Activated T-helper 1 cell treated with anti-CD3 and anti-CD28 coated beads, Interleukin-12 subunit alpha, Interleukin-12 subunit beta, Interleukin-2, Interleukin-4 antibody, amounts not matched to agents 30 ng/mL and 10 ng/mL and 1 ng/mL, durations not matched to agents 14 hours and 24 hours and 36 hours (primary cell): ENCODE measurements at regions of chr16 and their contacts with region 1.

Region 1: GRCh38 chr16:30922960-30923535 is 324 bp upstream of the FBXL19 start:
- DNase-seq: peak; percentile 95
- H3K4me3 Mint-ChIP-seq: peak overlapping the region; percentile 95
- H3K27ac Mint-ChIP-seq: peak overlapping the region; percentile 100
- H3K4me1 Mint-ChIP-seq: peaks cover 18% of the 10 kb centered on the region
- H3K27me3 Mint-ChIP-seq: no peaks in the 10 kb centered on the region

Region 2: DNA sequence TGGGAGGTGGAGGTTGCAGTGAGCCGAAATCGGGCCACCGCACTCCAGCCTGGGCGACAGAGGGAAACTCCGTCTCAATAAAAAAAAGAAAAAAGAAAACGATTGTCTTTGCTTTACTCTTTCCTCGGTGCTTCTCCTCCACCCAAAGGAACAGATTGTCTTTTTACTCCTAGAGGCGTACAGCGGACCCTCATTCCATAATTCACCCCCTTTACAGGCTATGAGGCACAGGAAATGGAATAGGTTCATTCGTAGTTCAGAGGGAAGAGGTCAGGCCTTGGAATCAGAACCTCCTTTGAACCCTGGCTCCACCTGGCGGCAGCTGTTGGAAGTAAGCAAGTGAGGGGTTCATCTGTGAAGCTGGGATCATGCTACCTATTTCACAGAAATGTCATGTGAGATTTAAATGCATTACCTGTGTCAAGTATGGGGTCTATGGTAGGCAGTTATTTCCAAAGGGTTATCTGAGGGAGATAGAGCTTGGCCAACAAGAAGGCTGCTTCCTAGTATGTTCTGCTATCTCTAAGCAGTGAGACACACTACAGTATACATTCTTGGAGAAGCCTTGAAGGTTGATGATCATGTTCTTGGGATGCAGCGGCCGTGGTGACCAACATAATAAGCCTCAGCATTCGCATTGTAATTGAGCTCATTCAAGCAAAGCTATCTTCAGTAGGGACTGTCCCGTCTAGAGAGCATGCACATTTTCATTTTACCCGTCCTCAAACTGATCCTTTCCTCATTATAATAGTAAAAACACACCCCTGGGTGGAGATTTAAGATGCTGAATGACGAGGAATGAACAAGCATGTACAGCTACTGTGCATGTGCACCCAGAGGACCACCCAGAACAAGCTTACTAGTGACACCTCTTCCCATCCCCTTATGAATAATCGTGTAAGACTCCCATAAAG is 294.2 kb before region 1 on chr16:
- intact Hi-C with region 1: loop called (anchors 1 kb)
- DNase-seq: peak; percentile 77
- H3K4me3 Mint-ChIP-seq: peak overlapping the region; percentile 52
- H3K27ac Mint-ChIP-seq: peak overlapping the region; percentile 71
- H3K4me1 Mint-ChIP-seq: peaks cover 10% of the 10 kb centered on the region
- H3K27me3 Mint-ChIP-seq: no peaks in the 10 kb centered on the region

Region 3: DNA sequence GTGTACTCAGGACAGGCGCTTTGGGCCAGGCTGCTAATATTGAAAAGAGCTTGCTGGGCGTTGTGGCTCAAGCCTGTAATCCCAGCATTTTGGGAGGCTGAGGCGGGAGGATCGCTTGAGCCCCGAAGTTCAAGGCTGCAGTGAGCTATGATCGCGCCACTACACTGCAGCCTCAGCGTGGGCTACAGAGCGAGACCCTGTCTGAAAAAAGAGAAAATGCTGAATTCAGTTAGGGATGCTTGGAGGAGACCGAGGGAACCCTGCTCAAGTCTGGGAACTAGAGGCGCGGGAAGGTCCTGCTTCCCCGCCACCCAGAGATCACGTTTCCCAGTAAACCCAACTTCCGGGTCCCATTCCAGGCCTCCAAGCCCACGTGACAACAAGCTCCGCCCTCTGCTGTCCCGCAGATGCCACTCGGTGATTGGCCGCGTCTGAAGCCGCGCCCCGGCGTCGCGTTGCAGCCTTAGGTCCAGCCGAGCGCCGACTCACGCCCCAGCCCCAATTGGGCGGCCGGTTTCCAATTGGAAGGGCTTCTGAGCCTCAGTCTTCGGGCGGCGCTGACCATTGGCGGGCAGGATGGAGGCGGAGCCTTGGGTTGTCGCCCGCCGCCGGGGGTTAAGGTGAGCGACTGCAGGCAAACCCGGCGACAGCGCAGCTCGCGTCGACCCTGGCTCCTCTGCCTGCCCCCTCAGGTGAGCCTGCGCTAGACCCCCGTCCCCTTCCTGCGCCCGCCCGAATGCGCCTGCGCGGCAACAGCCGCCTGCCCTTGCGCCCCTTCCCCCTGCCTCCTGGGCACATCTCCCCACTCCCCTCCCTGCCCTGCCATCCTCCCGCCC is 175.0 kb before region 1 on chr16 and contains the start of gene PHKG2:
- intact Hi-C with region 1: loop called (anchors 1 kb)
- DNase-seq: peak; percentile 97
- H3K4me3 Mint-ChIP-seq: peak within 1 kb of the TSS; percentile 93
- H3K27ac Mint-ChIP-seq: peak within 1 kb of the TSS; percentile 83
- H3K4me1 Mint-ChIP-seq: peaks cover 19% of the 10 kb centered on the region
- H3K27me3 Mint-ChIP-seq: no peaks in the 10 kb centered on the region
- total RNA-seq, gene PHKG2: 42.4 and 43.6 TPM in 2 replicates

Region 4: GRCh38 chr16:30829130-30830071 is 93.6 kb before region 1 on chr16:
- intact Hi-C with region 1: no loop called
- DNase-seq: no peak
- H3K4me3 Mint-ChIP-seq: no peak overlapping the region
- H3K27ac Mint-ChIP-seq: no peak overlapping the region
- H3K4me1 Mint-ChIP-seq: no peaks in the 10 kb centered on the region
- H3K27me3 Mint-ChIP-seq: peaks cover 15% of the 10 kb centered on the region

Region 5: DNA sequence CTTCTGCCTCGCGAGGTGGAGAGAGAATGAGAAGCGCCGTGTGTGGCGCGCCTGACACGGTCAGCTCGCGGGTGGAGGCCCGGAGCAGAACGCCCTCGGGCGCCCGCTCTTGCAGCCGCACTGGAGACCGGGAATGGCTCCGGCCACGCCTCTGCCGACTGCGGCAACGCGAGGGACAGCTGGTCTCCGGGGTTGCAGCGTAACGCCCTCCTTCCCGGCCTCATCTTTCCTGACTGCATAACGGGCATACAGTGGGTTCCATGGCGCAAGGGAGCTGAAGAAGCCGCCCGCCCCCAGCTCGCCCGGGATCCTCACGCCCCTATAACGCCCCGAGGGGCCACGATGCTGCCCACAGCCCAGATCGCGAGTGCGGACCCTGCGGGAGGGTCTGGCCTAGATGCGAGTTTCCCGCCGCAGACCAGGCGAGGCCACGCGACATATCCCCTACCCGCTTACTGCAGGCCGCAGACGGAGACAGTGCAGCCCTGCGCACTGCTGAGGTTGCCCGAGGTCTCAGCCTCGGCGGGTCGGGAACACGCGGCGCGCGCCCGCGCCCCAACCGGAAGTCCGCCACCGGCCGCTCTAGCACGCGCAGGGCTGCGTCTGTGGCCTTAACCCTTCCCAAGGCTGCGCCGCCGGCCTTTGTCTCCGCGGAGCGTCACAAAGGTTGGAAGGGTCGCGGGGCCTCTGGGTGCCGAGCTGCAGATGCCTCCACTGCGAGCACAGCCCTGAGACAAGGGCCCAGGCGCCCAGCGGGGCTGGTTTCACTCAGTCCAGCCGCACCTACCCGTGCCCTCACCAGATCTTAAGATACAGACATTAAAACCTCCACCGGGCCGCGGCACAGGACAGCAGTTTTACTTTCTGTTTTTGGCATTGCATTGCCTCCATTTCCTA is 48.0 kb before region 1 on chr16:
- intact Hi-C with region 1: loop called (anchors 1 kb)
- DNase-seq: peak; percentile 86
- H3K4me3 Mint-ChIP-seq: peak overlapping the region; percentile 97
- H3K27ac Mint-ChIP-seq: peak overlapping the region; percentile 94
- H3K4me1 Mint-ChIP-seq: peaks cover 23% of the 10 kb centered on the region
- H3K27me3 Mint-ChIP-seq: no peaks in the 10 kb centered on the region

Region 6: DNA sequence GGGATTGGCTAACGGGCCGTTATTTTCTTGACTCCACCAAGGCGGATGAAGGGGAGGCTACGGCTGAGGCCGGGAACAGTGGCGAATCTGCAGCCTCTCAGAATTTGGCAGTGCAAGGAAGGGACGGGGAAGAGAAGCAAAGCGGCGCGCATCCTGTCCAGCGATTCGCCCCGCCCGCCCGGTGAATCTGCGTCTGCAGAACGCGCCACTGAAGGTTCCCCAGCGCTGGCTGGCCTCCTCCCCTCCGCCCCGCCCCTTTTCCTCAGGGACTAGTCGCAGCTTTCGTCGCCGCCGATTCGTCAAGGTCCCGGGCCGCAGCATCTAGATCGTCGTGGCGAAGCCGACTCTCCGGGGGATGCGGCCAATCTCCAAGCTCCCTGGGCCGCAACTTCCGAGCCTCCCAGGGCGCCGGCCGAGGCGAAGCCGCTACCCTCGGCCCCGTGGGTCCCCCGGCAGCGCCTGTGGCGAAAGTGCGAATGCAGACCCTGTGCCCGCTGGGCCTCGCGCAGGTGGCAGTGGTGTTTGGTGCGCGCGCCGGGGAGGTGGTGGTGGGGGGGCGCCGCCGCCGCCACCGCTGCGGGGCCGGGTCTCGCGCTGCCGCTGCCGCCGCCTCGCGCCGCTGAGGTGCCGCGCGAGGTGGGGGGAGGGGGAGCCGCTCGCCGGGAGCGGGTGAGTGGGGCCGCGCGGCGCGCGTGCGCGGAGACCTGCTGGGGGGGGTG is 34.6 kb after region 1 on chr16 and contains the start of gene SETD1A:
- intact Hi-C with region 1: loop called (anchors 1 kb)
- DNase-seq: peak; percentile 93
- H3K4me3 Mint-ChIP-seq: peak within 1 kb of the TSS; percentile 96
- H3K27ac Mint-ChIP-seq: peak within 1 kb of the TSS; percentile 97
- H3K4me1 Mint-ChIP-seq: peaks cover 28% of the 10 kb centered on the region
- H3K27me3 Mint-ChIP-seq: no peaks in the 10 kb centered on the region
- total RNA-seq, gene SETD1A: 34.0 and 38.8 TPM in 2 replicates

Region 7: GRCh38 chr16:31108035-31108793 is 185.2 kb after region 1 on chr16 and contains the start of gene BCKDK:
- intact Hi-C with region 1: loop called (anchors 2 kb)
- DNase-seq: peak; percentile 69
- H3K4me3 Mint-ChIP-seq: peak within 1 kb of the TSS; percentile 84
- H3K27ac Mint-ChIP-seq: peak within 1 kb of the TSS; percentile 86
- H3K4me1 Mint-ChIP-seq: peaks cover 22% of the 10 kb centered on the region
- H3K27me3 Mint-ChIP-seq: no peaks in the 10 kb centered on the region
- total RNA-seq, gene BCKDK: 43.6 and 44.8 TPM in 2 replicates

Region 8: DNA sequence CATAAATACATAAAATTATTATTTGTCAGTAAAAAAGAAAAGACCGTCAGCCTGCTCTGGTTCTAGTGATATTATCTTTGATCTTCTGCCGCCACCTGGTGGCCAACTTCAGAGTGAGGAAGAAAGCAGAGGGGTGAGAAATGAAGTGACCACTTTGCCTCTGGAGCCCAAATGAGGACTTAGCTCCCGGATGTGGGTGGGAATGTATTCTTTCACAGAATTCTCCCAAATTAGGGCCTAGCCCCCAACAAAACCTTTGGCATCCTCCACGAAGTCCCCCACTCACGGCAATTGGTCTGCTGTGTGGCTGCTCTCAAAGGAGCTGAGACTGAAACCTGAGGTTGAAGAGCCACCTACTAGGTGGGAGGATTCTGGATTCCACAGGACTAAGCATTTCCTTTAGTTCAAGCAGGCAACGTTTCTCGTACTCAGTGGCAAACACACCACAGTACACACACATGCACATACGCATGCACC is 945.7 kb after region 1 on chr16:
- intact Hi-C with region 1: loop called (anchors 2 kb)
- DNase-seq: peak; percentile 74
- H3K4me3 Mint-ChIP-seq: peak overlapping the region; percentile 72
- H3K27ac Mint-ChIP-seq: peak overlapping the region; percentile 93
- H3K4me1 Mint-ChIP-seq: peaks cover 77% of the 10 kb centered on the region
- H3K27me3 Mint-ChIP-seq: peaks cover 3% of the 10 kb centered on the region